ENCODE measurements at regions of chr3 and their contacts with region 1.

Region 1: GRCh38 chr3:33074217-33075067 is 22.5 kb downstream of the GLB1 start:
- DNase-seq: peak; percentile 82
- ATAC-seq: peak; percentile 76
- H3K4me3 Mint-ChIP-seq: no peak overlapping the region
- H3K27ac Mint-ChIP-seq: no peak overlapping the region
- H3K4me1 Mint-ChIP-seq: peaks cover 46% of the 10 kb centered on the region
- H3K27me3 Mint-ChIP-seq: no peaks in the 10 kb centered on the region

Region 2: GRCh38 chr3:33030802-33031201 is 43.6 kb before region 1 on chr3:
- CTCF ChIA-PET with region 1: interaction called, 37 read pairs
- DNase-seq: peak; percentile 81
- ATAC-seq: peak; percentile 83
- H3K4me3 Mint-ChIP-seq: no peak overlapping the region
- H3K27ac Mint-ChIP-seq: peak overlapping the region; percentile 70
- H3K4me1 Mint-ChIP-seq: peaks cover 29% of the 10 kb centered on the region
- H3K27me3 Mint-ChIP-seq: no peaks in the 10 kb centered on the region

Region 3: DNA sequence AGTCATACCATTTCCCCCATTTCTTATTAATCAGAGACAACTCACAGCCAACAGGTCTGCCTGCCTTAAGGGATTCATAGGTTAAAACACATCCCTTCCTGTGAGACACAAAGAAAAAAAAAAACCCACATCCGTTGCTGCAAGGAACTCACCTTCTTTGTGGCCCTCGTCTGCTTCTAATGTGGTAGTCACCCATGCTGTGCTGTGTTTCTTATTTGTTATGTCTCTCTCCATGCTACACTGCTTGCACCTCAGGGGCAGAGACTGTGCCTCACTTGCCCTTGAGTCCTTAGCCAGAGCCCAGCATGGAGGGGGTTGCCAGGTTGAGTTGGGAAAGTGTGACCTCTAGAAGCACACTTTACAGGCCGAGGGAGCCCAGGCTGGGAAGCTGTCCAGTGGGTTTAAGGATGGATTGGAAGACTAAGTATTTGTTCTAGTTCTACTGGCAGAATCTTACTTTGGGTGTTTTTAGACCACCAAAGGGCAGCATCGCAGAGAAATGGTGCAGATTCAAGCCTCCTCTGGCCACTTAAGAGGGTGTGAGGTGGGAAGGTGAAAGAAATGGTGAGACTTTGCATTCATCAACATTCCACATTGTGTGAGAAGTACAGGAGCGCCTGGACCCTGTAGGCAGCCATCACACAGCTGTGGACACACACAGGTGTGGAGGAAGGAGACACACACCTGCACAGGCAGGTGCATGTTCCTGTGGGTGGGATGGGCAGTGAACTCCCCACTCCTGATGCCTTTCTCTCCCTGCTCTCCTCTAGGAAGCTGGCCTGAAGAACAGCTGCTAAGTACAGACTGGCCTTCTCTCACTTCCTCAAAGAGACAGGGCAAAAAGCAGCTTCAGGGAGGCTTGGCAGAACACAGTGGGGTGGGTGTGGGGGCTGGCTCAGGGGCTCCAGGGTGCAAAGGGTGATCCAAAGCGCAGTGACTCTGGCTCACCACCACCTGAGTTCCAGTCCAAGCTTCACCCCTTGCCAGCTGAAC is 26.3 kb before region 1 on chr3:
- CTCF ChIA-PET with region 1: interaction called, 49 read pairs
- DNase-seq: peak; percentile 79
- ATAC-seq: peak; percentile 77
- H3K4me3 Mint-ChIP-seq: peak overlapping the region; percentile 29
- H3K27ac Mint-ChIP-seq: peak overlapping the region; percentile 97
- H3K4me1 Mint-ChIP-seq: peaks cover 79% of the 10 kb centered on the region
- H3K27me3 Mint-ChIP-seq: no peaks in the 10 kb centered on the region

Region 4: DNA sequence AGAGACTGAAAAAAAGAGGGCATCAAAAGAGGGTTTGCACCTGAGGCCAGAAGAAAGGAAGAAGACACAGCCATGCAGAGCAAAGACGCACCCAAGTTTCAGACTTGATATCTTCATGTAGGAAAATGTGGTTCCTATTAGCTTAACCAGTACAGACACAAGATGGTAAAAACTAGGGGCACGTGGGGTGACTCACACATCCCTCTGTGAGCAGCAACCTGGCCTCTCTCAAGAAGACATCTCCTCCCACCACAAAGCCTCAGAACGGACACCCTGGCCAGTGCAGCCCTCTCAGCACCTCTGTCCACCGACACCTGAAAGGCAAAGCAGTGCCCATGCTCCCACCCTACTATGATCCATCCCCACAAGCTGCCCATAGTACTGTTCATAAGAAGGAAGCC is 10.8 kb before region 1 on chr3:
- CTCF ChIA-PET with region 1: interaction called, 21 read pairs
- DNase-seq: peak; percentile 82
- ATAC-seq: peak; percentile 68
- H3K4me3 Mint-ChIP-seq: peak overlapping the region; percentile 29
- H3K27ac Mint-ChIP-seq: peak overlapping the region; percentile 84
- H3K4me1 Mint-ChIP-seq: peaks cover 70% of the 10 kb centered on the region
- H3K27me3 Mint-ChIP-seq: no peaks in the 10 kb centered on the region

Region 5: DNA sequence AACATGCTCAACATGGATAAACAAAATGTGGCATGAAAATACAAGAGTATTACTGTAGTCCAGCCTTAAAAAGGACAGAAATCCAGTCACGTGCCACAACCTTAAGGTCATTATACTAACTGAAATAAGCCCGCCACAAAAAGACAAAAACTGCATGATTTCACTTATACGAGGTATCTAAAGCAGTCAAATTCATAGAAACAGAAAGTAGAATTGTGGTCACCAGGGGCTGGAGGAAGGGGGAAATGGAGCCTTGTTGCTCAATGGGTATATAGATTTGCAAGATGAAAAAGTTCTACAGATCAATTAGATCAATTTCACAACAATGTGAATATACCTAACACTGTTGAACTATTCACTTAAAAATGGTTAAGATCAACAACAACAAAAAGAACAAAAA is 15.1 kb after region 1 on chr3:
- CTCF ChIA-PET with region 1: interaction called, 10 read pairs
- DNase-seq: no peak
- ATAC-seq: peak; percentile 69
- H3K4me3 Mint-ChIP-seq: no peak overlapping the region
- H3K27ac Mint-ChIP-seq: no peak overlapping the region
- H3K4me1 Mint-ChIP-seq: peaks cover 64% of the 10 kb centered on the region
- H3K27me3 Mint-ChIP-seq: no peaks in the 10 kb centered on the region

Region 6: GRCh38 chr3:33144433-33144832 is 70.0 kb after region 1 on chr3:
- CTCF ChIA-PET with region 1: no interaction called
- DNase-seq: peak; percentile 45
- ATAC-seq: no peak
- H3K4me3 Mint-ChIP-seq: no peak overlapping the region
- H3K27ac Mint-ChIP-seq: no peak overlapping the region
- H3K4me1 Mint-ChIP-seq: no peaks in the 10 kb centered on the region
- H3K27me3 Mint-ChIP-seq: no peaks in the 10 kb centered on the region

Region 7: GRCh38 chr3:33372218-33373081 is 298.0 kb after region 1 on chr3:
- CTCF ChIA-PET with region 1: interaction called, 10 read pairs
- DNase-seq: peak; percentile 65
- ATAC-seq: peak; percentile 74
- H3K4me3 Mint-ChIP-seq: no peak overlapping the region
- H3K27ac Mint-ChIP-seq: no peak overlapping the region
- H3K4me1 Mint-ChIP-seq: peaks cover 8% of the 10 kb centered on the region
- H3K27me3 Mint-ChIP-seq: peaks cover 11% of the 10 kb centered on the region